Cardiac septum (tissue), 1 donor: ENCODE measurements at regions of chr2 and their contacts with region 1.

Region 1: GRCh38 chr2:13000664-13001363 is 284.1 kb downstream of the TRIB2 start:
- DNase-seq: no peak

Region 2: GRCh38 chr2:11962707-11963328 is 1038.0 kb before region 1 on chr2:
- intact Hi-C with region 1: loop called (anchors 5 kb)
- DNase-seq: no peak

Region 3: GRCh38 chr2:12514631-12515433 is 486.0 kb before region 1 on chr2:
- intact Hi-C with region 1: no loop called
- DNase-seq: no peak

Region 4: DNA sequence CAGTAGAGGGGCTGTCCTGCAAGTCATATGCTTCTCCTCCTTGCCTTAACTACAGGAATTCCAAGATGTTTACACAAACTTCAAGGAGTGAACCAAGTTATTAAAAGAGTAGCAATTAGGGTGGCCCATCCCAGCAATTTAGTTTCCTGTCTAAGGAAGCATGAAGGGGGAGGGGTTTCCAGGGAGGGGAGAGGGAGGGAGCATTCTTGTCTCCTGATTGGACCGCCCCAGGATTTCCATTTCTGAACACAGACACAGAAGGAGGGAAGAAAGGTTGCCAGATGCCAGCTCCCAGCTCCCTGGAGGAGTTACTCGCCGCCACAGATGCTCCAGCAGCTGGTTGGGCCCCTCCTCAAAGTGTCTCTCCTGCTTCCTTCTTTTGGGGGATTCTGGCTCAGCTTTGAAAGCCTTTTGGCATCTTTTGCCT is 176.4 kb before region 1 on chr2:
- intact Hi-C with region 1: loop called (anchors 5 kb)
- DNase-seq: no peak

Region 5: DNA sequence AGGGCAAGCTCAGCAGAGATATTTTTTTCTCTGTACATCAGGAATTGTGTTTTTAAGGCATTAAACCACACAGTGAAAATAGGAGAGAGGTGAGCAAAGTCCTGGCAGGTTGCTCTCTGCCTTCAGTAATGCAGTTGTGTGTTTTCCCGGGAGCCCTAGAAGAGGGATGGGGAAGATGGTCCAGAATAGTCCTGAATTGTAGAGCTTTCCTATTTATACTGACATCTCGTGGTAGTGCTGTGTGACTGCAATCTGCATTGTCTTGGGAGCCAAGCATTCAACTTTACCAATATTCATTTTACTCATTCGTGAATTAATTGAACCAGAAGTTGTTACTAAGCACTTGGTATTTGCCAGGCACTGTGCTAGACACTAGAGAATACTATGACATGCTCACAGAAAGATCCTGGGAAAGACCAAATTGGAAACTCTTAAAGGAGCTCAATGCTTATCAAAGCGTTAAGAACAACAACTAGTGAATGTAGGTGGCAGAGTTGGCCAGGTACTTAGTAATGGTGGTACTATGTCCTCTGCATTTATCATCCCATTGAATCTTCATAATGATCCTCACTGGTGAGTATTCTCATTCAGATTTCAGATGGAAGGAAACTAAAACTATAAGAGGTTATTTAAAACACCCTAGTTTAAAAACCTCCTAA is 69.5 kb before region 1 on chr2:
- intact Hi-C with region 1: loop called (anchors 5 kb)
- DNase-seq: no peak